ENCODE measurements at regions of chr3 and their contacts with region 1.

Region 1: GRCh38 chr3:134308350-134308891 is 57.8 kb upstream of the RYK start:
- DNase-seq: peak; percentile 81 to 87 (median 84)
- ATAC-seq: peak; percentile 80
- H3K4me3 ChIP-seq: no peak overlapping the region
- H3K27ac ChIP-seq: peak overlapping the region; percentile 54 to 57
- H3K4me1 ChIP-seq: peaks cover 23 to 30% of the 10 kb centered on the region in 2 donors
- H3K27me3 ChIP-seq: peaks cover 0 to 16% of the 10 kb centered on the region in 2 donors
- CTCF ChIP-seq: peak; percentile 91 to 99

Region 2: GRCh38 chr3:134473868-134474546 is 165.6 kb after region 1 on chr3:
- intact Hi-C with region 1: loop called (anchors 2 to 5 kb)
- DNase-seq: peak in 2 of 4 donors; percentile 72 to 79
- ATAC-seq: peak; percentile 82
- H3K4me3 ChIP-seq: no peak overlapping the region
- H3K27ac ChIP-seq: no peak overlapping the region
- H3K4me1 ChIP-seq: peaks cover 7 to 11% of the 10 kb centered on the region in 2 donors
- H3K27me3 ChIP-seq: no peaks in the 10 kb centered on the region
- CTCF ChIP-seq: peak; percentile 64 to 72